ENCODE measurements at regions of chr4 and their contacts with region 1.

Region 1: GRCh38 chr4:17324386-17324830 is 187.5 kb downstream of the QDPR start:
- DNase-seq: no peak
- ATAC-seq: peak; percentile 80

Region 2: GRCh38 chr4:16289897-16290554 is 1034.4 kb before region 1 on chr4:
- intact Hi-C with region 1: loop called (anchors 5 kb)
- DNase-seq: no peak
- ATAC-seq: peak; percentile 58

Region 3: GRCh38 chr4:16794816-16795445 is 529.5 kb before region 1 on chr4:
- intact Hi-C with region 1: loop called (anchors 5 kb)
- DNase-seq: peak; percentile 52
- ATAC-seq: peak; percentile 39

Region 4: DNA sequence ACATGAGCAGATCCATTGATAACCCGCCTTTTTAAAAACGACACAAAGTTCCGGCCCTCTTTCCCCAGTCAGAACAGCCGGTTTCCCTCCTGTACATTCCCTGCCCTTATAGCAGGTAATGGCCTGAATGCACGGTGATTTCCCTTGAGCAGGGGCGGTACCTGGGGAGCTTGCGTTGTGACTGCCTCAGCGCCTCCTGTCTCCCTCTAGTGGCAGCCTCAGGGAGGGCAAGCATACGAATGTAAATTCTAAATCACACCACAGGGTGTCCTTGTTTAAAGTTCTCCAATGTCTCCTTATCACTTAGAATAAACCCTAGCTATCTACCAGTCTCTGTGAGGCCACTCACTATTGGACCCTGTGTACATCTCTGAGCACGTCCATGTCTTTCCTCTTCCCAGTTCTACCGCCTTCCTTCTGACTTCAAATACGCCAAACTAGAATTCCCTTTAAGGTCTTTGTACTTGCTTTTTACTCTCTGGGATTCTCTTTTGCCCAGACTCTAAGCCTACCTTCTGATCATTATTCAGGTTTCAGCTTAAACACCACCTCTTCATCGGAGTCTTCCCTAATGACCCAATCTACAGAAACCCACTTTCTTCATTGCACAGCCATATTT is 407.6 kb before region 1 on chr4:
- intact Hi-C with region 1: loop called (anchors 5 kb)
- DNase-seq: peak; percentile 53
- ATAC-seq: peak; percentile 49

Region 5: GRCh38 chr4:17173300-17173699 is 151.1 kb before region 1 on chr4:
- intact Hi-C with region 1: loop called (anchors 10 kb)
- DNase-seq: no peak
- ATAC-seq: peak; percentile 60

Region 6: GRCh38 chr4:18390655-18391353 is 1066.4 kb after region 1 on chr4:
- intact Hi-C with region 1: no loop called
- DNase-seq: no peak
- ATAC-seq: no peak

Measured in Right ventricle myocardium superior (tissue), 1 donor.